ENCODE measurements at regions of chr9 and their contacts with region 1.

Region 1: GRCh38 chr9:112665347-112665746 is 52.6 kb downstream of the INIP start:
- DNase-seq: peak; percentile 31
- H3K4me3 Mint-ChIP-seq: no peak overlapping the region
- H3K27ac Mint-ChIP-seq: no peak overlapping the region
- H3K4me1 Mint-ChIP-seq: no peaks in the 10 kb centered on the region
- H3K27me3 Mint-ChIP-seq: no peaks in the 10 kb centered on the region
- CTCF ChIP-seq: peak; percentile 36

Region 2: GRCh38 chr9:112680731-112681402 is 15.5 kb after region 1 on chr9:
- CTCF ChIA-PET with region 1: interaction called, 10 read pairs
- POLR2A ChIA-PET with region 1: no interaction called
- intact Hi-C with region 1: no loop called
- DNase-seq: no peak
- H3K4me3 Mint-ChIP-seq: no peak overlapping the region
- H3K27ac Mint-ChIP-seq: no peak overlapping the region
- H3K4me1 Mint-ChIP-seq: no peaks in the 10 kb centered on the region
- H3K27me3 Mint-ChIP-seq: no peaks in the 10 kb centered on the region
- CTCF ChIP-seq: no peak